HepG2 (cell line): ENCODE measurements at regions of chr5 and their contacts with region 1.

Region 1: DNA sequence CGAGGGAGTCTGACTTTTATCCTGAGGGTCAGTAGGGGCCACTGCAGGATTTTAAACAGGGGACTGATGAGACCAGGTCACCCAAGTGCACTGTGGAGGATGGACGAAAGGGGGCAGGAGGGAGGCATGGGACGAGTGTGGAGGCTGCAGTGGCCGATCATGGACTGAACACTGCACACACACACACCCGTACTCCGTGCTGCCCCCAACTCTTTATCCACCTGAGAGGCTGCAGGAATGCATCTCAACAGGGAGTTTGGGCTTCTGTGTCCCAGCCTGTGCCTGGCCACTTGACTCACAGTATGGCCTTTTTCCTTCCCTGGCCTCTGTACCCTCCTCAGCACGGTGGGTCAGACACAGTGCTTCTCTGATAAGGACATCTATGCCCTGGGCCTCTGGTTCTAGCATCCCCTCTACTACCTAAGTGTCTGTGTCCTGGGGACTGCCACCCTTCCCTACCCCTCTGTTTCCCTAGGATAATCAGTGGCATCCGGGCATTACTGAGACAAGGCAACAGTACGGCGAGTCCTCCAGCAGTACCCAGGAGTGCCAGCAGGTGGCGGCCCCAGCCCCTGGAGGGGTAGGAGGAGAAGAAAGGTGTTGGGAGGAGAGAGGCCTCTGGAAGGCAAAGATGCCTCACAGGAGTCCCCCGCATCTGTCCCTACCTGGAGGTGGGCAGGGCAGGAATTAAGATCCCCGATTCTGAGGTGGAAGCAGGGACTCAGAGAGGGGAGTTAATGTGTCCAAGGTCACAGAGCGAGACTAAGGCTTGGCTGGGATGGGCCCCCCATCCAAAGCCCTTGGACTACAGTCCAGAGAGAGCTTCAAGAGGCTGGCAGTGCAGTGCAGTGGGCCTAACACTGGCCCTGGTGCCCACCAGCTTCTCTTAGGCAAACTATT is 5.1 kb upstream of the CDX1 start:
- DNase-seq: peak; percentile 69
- ATAC-seq: peak; percentile 88
- H3K4me3 ChIP-seq: peak overlapping the region; percentile 29 to 73 (median 34); a peak in 5 of 6 replicates
- H3K27ac ChIP-seq: no peak overlapping the region
- H3K4me1 ChIP-seq: peaks cover 71% of the 10 kb centered on the region
- H3K27me3 ChIP-seq: peaks cover 1 to 2% of the 10 kb centered on the region in 2 experiments; a peak in 3 of 5 replicates
- CTCF ChIP-seq: peak; percentile 87
- EP300 ChIP-seq: no peak
- POLR2A ChIP-seq: no peak
- RAD21 ChIP-seq: peak; percentile 69

Region 2: DNA sequence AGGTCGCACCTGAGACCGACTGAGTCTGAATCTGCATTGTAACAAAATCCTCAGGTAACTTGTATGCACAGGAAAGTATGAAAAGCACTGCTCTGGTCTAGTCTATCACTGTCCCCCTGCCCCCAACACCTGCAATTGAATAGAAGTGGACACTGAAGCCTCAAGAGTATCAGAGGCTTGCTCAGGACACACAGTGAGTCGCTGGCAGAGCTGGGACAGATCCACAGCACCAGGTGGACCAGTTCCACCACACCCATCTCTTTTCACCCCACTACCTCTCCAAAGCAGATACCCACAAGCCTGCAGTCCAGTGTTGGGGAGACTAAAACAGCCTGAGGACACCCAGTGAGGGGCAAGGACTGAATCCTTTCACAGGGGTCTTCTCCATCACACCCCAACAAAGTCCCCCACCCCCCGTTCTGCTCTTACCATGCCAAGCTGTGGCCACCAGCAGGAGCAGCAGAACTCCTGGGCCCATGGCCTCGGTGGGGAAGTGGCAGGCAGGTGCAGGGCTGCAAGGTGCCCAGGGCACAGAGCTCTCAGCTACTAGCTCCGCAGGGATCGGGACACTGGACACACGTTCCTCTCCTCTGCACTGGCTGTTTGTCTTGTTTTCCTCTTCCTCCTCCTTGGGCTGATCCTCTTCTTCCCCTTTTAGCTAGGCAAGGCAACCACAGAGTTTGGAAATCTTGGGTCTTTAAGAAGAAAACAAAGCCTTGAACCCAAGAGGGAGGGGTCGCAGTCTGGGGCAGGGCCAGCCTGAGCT is 75.4 kb before region 1 on chr5 and contains the start of gene CSF1R:
- CTCF ChIA-PET with region 1: no interaction called
- POLR2A ChIA-PET with region 1: no interaction called
- in situ Hi-C with region 1: no loop called
- intact Hi-C with region 1: no loop called
- DNase-seq: no peak
- ATAC-seq: no peak
- H3K4me3 ChIP-seq: no peak within 1 kb of the TSS
- H3K27ac ChIP-seq: no peak within 1 kb of the TSS
- H3K4me1 ChIP-seq: no peaks in the 10 kb centered on the region
- H3K27me3 ChIP-seq: peaks cover 2 to 28% of the 10 kb centered on the region in 2 experiments; a peak in 4 of 5 replicates
- CTCF ChIP-seq: no peak
- EP300 ChIP-seq: no peak
- POLR2A ChIP-seq: no peak
- RAD21 ChIP-seq: no peak
- total RNA-seq, gene CSF1R: not detected in 2 replicates

Region 3: DNA sequence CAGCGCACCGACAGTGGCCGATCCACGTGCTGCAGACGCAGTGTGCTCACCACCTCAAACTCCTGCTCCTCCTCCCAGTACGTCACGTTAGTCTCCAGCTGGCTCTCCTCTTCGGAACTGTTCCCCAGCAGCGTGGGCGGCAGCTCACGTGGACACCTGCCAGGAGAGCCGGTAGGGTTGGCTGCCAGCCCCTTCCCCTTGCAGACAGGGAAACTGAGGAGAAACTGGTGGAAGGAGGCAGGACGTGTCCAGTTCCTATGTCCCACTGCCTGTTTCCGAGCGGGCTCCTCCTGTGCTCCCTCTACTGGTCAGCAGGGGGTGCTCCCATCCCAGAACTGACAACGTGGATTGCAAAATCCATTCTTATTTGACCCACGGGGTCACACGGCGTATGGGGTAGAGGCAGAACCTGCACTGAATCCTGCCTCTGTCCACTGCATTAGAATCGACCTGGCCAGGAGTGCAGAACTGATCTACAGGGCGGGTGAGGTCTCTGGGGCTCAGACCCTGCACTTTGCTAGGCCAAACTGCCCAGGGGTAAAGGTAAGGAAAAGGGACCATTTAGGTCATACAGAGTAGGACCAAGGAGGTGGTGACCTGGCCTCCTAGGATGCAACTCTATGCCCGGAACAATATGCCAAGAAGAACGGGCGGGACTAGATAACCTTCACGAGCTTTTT is 31.5 kb before region 1 on chr5:
- CTCF ChIA-PET with region 1: interaction called, 22 read pairs
- POLR2A ChIA-PET with region 1: no interaction called
- in situ Hi-C with region 1: no loop called
- intact Hi-C with region 1: loop called (anchors 1 kb)
- DNase-seq: peak; percentile 67
- ATAC-seq: peak; percentile 88
- H3K4me3 ChIP-seq: no peak overlapping the region
- H3K27ac ChIP-seq: no peak overlapping the region
- H3K4me1 ChIP-seq: peaks cover 43% of the 10 kb centered on the region
- H3K27me3 ChIP-seq: no peaks in the 10 kb centered on the region
- CTCF ChIP-seq: peak; percentile 99
- EP300 ChIP-seq: 0 out of 4 replicates have a peak, but pooled peaks have one; percentile 35 to 39
- POLR2A ChIP-seq: no peak
- RAD21 ChIP-seq: peak; percentile 98

Region 4: GRCh38 chr5:150272526-150272925 is 111.0 kb after region 1 on chr5:
- CTCF ChIA-PET with region 1: no interaction called
- POLR2A ChIA-PET with region 1: no interaction called
- in situ Hi-C with region 1: no loop called
- intact Hi-C with region 1: no loop called
- DNase-seq: peak; percentile 55
- ATAC-seq: peak; percentile 86
- H3K4me3 ChIP-seq: no peak overlapping the region
- H3K27ac ChIP-seq: no peak overlapping the region
- H3K4me1 ChIP-seq: peaks cover 21% of the 10 kb centered on the region
- H3K27me3 ChIP-seq: peaks cover 3 to 34% of the 10 kb centered on the region in 2 experiments; a peak in 4 of 5 replicates
- CTCF ChIP-seq: peak; percentile 88
- EP300 ChIP-seq: no peak
- POLR2A ChIP-seq: no peak
- RAD21 ChIP-seq: peak; percentile 70

Region 5: DNA sequence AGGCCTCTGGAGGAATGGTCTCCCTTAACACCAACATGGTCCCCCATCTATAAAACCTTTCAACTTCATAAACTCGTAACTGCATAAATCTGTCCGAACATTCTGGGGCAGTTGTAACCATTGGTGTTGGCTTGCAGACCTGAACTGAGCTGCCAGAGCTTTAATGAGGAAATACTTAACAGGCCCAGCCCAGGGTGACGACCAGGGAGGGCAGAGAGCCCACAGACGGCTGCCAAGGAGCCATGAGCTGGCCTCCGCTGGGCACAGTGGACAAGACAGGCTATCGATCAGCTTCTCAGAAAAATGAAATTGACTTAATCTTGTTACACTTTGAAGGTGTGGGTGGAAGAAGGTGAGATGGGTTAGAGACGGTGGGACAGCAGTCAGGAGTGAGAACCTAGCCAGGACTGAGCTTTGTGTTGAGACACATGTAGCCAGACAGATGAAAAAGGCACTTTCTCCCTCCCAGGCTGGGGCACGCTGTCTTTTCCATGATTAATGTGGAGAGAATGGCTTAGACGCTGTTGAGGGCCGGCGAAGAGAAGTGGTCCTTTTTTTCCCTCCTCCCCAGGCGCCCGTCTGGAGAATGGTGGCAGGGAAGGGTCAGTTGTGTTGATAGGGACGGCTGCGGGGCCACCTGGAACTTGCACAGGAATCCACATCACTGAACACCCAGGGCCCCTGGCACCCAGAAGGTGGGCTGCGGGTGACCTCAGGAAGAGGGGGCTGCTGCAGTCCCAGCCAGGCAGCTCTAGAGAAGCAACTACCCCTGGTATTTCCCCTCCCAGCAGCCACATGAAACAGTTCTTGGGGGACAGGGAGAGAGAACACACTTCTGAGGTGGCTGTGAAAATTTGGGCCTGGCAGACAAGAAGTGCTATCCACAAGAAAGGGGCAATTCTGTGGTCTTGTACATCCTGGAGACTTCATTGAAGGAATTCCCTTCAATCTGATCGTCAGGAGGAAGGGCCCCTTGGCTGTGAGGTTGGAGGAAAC is 168.7 kb after region 1 on chr5:
- CTCF ChIA-PET with region 1: no interaction called
- POLR2A ChIA-PET with region 1: no interaction called
- in situ Hi-C with region 1: no loop called
- intact Hi-C with region 1: no loop called
- DNase-seq: no peak
- ATAC-seq: no peak
- H3K4me3 ChIP-seq: no peak overlapping the region
- H3K27ac ChIP-seq: no peak overlapping the region
- H3K4me1 ChIP-seq: peaks cover 28% of the 10 kb centered on the region
- H3K27me3 ChIP-seq: peaks cover 6 to 18% of the 10 kb centered on the region in 2 experiments; a peak in 3 of 5 replicates
- CTCF ChIP-seq: no peak
- EP300 ChIP-seq: no peak
- POLR2A ChIP-seq: no peak
- RAD21 ChIP-seq: no peak